HEK293T (cell line): ENCODE measurements at regions of chr15 and their contacts with region 1.

Region 1: DNA sequence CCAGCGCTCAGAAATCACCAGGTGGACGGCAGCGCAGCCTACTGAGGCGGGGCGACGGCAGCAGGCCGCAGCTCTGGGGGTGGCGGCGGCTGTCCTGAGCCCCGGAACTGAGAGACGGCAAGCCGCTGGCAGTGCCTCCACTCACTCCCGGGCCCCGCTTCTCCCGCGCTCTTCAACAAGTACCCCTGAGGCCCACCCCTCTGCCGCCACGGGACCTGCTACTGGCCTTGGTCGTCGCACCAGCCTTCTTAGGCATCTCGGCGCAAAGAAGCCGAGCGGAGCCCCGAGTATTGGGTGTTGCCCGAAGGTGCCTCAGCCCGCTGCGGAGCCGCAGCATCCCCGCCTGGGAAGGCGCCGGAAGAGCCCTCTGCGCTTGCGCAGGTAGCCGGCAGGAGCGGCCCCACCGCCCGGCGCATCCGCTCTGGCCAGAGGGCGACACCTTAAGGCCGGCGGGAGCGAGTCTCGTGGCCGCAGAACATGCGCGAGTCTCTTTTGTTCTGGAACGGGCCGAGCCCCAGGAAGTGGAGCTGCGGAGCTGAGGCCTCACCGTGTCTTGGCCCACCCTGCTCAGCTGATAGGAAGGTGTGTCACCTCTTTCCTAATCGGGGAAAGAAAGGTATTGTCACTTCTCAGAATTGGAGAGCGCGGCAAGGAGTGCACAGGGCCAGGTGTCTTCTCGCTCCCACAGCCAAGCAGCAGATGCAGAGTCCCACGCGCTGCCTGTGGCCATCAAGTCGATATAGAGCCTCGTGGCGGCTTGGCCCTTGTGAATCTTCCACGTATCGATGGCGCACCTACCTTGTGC is at the start of gene C15orf40:
- DNase-seq: peak; percentile 97

Region 2: DNA sequence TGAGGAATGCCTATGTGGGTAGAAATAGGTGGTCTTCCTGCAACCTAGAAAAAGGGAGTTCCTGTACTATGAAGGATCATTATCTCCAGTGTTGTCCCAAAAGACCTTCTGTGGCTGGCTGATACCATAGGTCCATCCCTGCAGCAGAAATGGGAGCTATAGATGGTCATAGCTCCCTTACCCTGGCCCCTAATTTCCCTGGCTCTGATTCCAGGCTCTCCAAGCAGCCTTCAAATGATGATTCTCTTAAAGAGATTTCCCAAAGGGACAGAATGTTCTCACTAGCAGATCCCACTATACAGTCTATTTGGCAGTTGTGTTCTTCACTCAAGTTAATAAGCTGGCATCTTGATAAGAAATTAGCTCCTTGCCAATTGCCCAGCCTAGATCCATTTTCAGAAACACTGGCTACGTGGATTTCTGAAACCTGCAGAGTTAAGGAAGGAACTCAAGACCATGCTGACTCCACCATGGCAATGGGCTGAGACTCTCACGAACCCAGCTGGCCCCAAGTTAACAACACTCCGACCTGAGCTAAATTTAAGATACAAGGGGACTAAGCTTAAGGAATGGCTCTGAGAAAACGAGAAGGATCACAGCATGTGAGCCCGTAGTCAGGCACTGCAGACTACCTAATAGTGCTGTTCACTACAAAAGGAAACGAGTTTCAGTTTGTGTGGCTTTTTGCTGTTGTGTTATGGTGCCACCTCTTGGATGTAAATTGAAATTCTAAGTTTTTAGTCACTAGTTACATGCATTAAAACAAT is 11.4 kb before region 1 on chr15:
- CTCF ChIA-PET with region 1: interaction called, 11 read pairs
- POLR2A ChIA-PET with region 1: interaction called, 11 read pairs
- DNase-seq: peak; percentile 59

Region 3: GRCh38 chr15:83036253-83036652 is 24.8 kb after region 1 on chr15:
- CTCF ChIA-PET with region 1: no interaction called
- POLR2A ChIA-PET with region 1: no interaction called
- DNase-seq: no peak

Region 4: DNA sequence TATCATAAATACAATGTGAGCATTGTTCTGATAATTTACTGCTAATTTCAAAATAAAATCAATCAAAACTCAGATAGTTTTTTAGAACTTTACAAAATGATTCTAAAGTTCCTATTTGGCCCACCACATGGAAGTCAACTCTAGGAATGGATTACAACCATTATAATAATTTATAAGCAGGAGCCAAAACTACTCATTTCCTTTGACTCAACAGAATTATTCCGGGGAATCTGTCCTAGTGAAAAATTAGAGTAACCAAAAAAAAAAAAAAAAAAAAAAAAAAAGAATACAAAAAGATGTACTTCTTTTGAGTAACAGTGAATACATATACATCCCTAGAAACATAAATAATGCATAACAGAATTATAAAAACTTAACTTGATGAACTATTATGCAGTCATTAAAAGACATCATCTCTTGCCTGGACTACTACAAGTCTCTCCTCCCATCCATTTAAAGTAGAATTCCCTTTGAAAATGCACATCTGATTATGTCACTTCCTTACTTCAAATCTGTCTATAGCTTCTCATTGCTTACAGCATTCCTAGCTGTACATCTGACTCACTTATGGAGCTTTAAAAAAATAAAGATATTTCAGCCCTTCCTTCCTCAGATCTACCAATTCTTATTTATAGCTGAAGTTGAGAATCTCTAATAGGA is 152.8 kb after region 1 on chr15:
- CTCF ChIA-PET with region 1: no interaction called
- POLR2A ChIA-PET with region 1: no interaction called
- DNase-seq: no peak

Region 5: DNA sequence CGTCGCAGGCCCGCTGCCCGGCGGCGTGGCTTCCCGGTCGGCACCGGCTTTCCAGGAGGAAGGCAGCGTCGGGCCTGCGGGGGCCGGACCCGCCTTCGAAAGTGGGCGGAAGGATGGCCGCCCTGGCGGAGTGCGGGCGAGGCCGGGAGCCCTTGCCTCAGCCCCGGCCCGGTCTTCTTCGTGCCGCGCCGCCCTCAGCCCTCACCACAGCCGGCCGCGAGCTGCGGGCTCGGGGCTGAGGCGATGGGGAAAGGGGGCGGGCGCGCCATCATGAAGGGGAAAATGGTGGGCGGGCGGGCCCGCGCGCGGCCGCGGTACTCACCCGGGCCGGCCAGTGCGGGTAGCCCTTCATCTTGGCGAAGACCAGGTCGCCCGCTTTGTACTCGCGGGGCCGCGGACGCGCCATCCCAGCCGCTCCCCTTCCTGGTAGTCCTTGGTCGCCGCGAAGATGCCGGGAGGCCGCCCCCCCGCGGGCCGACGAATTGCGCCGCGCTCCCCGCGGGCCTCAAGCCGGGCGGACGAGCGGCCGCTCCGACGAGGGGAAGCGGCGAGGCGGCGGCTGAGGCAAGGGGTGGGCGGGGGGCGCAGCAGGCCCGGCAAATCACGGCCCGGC is 195.6 kb after region 1 on chr15:
- CTCF ChIA-PET with region 1: no interaction called
- POLR2A ChIA-PET with region 1: interaction called, 15 read pairs
- DNase-seq: peak; percentile 67